OCI-LY7 (cell line): ENCODE measurements at regions of chr3 and their contacts with region 1.

Region 1: DNA sequence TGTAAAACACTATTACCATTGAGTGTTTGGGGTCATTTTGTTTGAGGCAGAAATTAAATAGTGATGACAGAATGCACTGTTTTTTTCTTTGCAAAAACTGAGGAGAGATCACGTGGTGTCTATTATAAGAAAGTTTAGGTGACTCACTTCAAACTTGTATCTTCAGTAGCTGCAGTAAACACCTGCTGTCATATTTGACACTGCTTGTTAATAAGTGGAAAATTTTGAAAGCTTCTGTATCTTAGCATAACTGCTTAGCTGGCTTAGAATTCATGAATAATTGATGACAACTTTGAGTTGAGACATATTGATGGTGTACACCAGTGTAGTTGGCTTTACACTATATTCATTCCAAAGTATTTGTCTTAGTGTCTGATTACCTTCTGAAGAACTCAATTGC is 29.7 kb upstream of the MDFIC2 start:
- DNase-seq: no peak
- H3K4me3 ChIP-seq: no peak overlapping the region
- H3K27ac ChIP-seq: no peak overlapping the region
- H3K4me1 ChIP-seq: no peaks in the 10 kb centered on the region
- CTCF ChIP-seq: no peak

Region 2: GRCh38 chr3:70400194-70400593 is 58.0 kb after region 1 on chr3:
- CTCF ChIA-PET with region 1: no interaction called
- POLR2A ChIA-PET with region 1: no interaction called
- intact Hi-C with region 1: loop called (anchors 10 kb)
- DNase-seq: no peak
- H3K4me3 ChIP-seq: no peak overlapping the region
- H3K27ac ChIP-seq: no peak overlapping the region
- H3K4me1 ChIP-seq: no peaks in the 10 kb centered on the region
- CTCF ChIP-seq: no peak

Region 3: DNA sequence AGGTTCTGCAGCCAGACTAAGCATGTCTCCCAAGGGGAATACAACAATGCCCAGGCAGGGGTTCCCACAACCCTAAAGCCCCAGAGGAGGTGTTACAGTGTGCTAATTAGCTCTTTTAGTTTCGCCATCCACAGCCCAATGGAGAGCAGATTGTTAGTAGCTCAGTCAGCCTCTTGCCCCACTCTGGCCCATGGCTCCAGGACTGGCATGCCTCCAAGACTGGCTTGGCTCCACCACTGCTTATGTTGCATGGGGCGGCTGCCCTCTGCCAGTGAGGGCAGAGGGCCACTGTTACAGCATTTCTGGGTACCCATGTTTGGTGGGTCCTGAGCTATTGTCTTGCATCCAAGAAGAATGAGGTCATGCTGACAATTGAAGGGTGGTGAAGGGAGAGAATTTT is 201.3 kb after region 1 on chr3:
- CTCF ChIA-PET with region 1: no interaction called
- POLR2A ChIA-PET with region 1: no interaction called
- intact Hi-C with region 1: no loop called
- DNase-seq: no peak
- H3K4me3 ChIP-seq: no peak overlapping the region
- H3K27ac ChIP-seq: no peak overlapping the region
- H3K4me1 ChIP-seq: no peaks in the 10 kb centered on the region
- CTCF ChIP-seq: no peak

Region 4: GRCh38 chr3:70614111-70614510 is 272.0 kb after region 1 on chr3:
- CTCF ChIA-PET with region 1: no interaction called
- POLR2A ChIA-PET with region 1: no interaction called
- intact Hi-C with region 1: no loop called
- DNase-seq: no peak
- H3K4me3 ChIP-seq: no peak overlapping the region
- H3K27ac ChIP-seq: no peak overlapping the region
- H3K4me1 ChIP-seq: no peaks in the 10 kb centered on the region
- CTCF ChIP-seq: 0 out of 2 replicates have a peak, but pooled peaks have one; percentile 13